Naive thymus-derived CD4-positive, alpha-beta T cell (primary cell): ENCODE measurements at regions of chr14 and their contacts with region 1.

Region 1: GRCh38 chr14:91714805-91715204 is 17.1 kb downstream of the CATSPERB start:
- DNase-seq: peak in 8 of 9 donors; percentile 25 to 69 (median 55)
- ATAC-seq: peak; percentile 80
- H3K4me3 ChIP-seq: no peak overlapping the region
- H3K4me3 Mint-ChIP-seq: peak overlapping the region in 7 of 10 donors; percentile 33 to 71 (median 62)
- H3K27ac ChIP-seq: no peak overlapping the region
- H3K27ac Mint-ChIP-seq: peak overlapping the region in 7 of 9 donors; percentile 43 to 88 (median 74)
- H3K4me1 ChIP-seq: peaks cover 0 to 4% of the 10 kb centered on the region in 2 donors
- H3K4me1 Mint-ChIP-seq: peaks cover 3 to 20% (median 10%) of the 10 kb centered on the region in 7 donors
- H3K27me3 ChIP-seq: no peaks in the 10 kb centered on the region
- H3K27me3 Mint-ChIP-seq: peaks cover 0 to 3% (median 0%) of the 10 kb centered on the region in 5 donors

Region 2: DNA sequence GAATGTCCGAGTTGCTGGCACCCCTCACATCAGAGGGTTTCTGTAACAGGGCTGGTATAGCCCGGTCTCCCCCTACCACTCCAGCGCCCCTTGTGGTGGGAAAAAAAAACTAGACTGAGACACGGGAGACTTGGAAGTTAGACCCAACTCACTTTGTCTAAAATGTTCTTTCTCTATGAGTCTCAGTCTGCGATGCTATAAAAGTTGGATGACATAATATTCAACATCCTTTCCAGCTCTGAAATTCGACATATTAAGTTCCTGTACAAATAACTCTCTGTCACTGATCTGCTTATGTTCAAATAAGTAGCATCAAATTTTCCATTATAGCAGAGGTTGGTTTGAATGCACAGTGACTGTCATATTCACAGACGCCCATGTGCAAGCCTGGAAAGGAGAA is 178.2 kb after region 1 on chr14:
- CTCF ChIA-PET with region 1: no interaction called
- POLR2A ChIA-PET with region 1: interaction called, 3 read pairs
- intact Hi-C with region 1: loop called in 1 of 2 experiments (anchors 5 kb)
- DNase-seq: peak in 3 of 9 donors; percentile 19 to 38 (median 30)
- ATAC-seq: peak; percentile 48
- H3K4me3 ChIP-seq: no peak overlapping the region
- H3K4me3 Mint-ChIP-seq: peak overlapping the region in 3 of 10 donors; percentile 31 to 55 (median 38)
- H3K27ac ChIP-seq: no peak overlapping the region
- H3K27ac Mint-ChIP-seq: peak overlapping the region; percentile 6 to 90 (median 72)
- H3K4me1 ChIP-seq: peaks cover 35 to 37% of the 10 kb centered on the region in 2 donors
- H3K4me1 Mint-ChIP-seq: peaks cover 30 to 80% (median 68%) of the 10 kb centered on the region in 7 donors
- H3K27me3 ChIP-seq: no peaks in the 10 kb centered on the region
- H3K27me3 Mint-ChIP-seq: no peaks in the 10 kb centered on the region

Region 3: DNA sequence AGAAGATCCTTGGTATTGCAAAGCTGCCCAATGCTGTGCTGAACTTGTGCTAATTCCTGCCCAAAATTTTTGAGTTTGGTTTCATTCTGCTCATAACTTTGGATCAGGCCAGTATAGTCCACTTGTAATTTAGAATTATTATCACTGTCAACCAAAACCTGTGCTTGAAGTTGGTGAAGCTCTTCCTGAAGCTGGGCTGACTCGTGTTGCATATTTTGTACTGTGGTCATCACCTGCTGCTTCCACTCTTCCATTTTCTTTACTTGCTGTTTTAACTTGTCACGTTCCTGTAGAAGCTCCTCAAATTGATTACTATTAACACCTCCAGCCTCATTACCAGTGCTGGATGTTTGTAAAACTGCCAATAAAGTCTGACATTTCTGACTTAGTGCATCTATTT is 289.3 kb after region 1 on chr14:
- CTCF ChIA-PET with region 1: no interaction called
- POLR2A ChIA-PET with region 1: no interaction called
- intact Hi-C with region 1: loop called in 1 of 2 experiments (anchors 10 kb)
- DNase-seq: no peak
- ATAC-seq: no peak
- H3K4me3 ChIP-seq: no peak overlapping the region
- H3K4me3 Mint-ChIP-seq: peak overlapping the region in 8 of 10 donors; percentile 1 to 84 (median 69)
- H3K27ac ChIP-seq: peak overlapping the region; percentile 52
- H3K27ac Mint-ChIP-seq: peak overlapping the region in 8 of 9 donors; percentile 74 to 95 (median 88)
- H3K4me1 ChIP-seq: peaks cover 4 to 37% of the 10 kb centered on the region in 2 donors
- H3K4me1 Mint-ChIP-seq: peaks cover 30 to 63% (median 58%) of the 10 kb centered on the region in 7 donors
- H3K27me3 ChIP-seq: no peaks in the 10 kb centered on the region
- H3K27me3 Mint-ChIP-seq: no peaks in the 10 kb centered on the region